Dendritic cell treated with granulocyte-macrophage colony-stimulating factor and Interleukin-4, amounts not matched to agents 40 ng/mL and 50 ng/mL, for 4 days (primary cell): ENCODE measurements at regions of chr17 and their contacts with region 1.

Region 1: DNA sequence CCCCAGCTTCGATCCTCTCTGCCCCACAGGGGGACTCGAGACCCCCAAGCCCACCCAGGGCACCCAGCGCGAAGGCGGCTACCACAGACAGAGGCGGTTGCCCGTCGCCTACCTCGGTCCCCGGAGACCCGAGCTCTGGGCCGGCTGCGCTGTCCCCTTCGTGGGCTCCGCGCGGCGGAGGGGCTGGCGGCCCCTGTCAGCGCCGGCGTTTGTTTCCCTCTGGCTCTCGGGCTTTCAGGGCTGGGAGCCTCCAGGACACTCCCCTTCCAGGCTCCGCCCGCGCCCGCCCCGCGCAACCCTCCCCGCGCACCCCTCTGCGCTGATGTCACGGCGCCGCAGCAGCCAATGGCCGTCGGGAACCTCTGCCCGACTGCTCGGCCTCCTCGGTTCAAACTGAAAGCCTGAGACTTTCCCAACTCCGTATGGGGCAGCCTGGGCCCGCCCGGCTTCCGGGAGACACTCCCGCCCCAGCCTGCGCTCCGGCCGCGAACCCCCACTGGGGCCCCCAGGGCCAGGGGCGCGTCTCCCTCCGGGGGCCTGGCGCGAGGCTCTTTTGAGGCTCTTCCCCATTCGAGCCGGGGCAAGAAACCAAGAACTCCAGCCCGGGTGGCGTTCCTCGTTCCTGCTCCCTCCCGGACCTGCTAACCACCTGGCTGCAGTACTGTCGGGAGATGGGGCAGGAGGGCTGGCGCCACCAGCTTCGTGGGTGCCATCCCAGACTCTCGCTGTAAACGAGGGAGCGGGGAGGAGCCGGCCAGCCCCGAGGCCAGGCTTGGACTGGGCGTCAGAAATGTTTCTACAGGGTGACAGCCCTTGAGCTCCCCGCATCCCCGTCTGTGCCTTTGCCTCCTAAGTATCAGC is at the start of gene CDC42EP4:
- H3K4me3 Mint-ChIP-seq: peak within 1 kb of the TSS; percentile 96
- H3K27ac Mint-ChIP-seq: peak within 1 kb of the TSS; percentile 86
- H3K4me1 Mint-ChIP-seq: peaks cover 34% of the 10 kb centered on the region
- H3K27me3 Mint-ChIP-seq: peaks cover 3% of the 10 kb centered on the region

Region 2: GRCh38 chr17:73192894-73193701 is 118.9 kb before region 1 on chr17 and contains the start of gene COG1:
- intact Hi-C with region 1: loop called (anchors 2 kb)
- H3K4me3 Mint-ChIP-seq: peak within 1 kb of the TSS; percentile 99
- H3K27ac Mint-ChIP-seq: peak within 1 kb of the TSS; percentile 92
- H3K4me1 Mint-ChIP-seq: peaks cover 22% of the 10 kb centered on the region
- H3K27me3 Mint-ChIP-seq: no peaks in the 10 kb centered on the region

Region 3: GRCh38 chr17:73231841-73232586 is 80.0 kb before region 1 on chr17:
- intact Hi-C with region 1: loop called (anchors 10 kb)
- H3K4me3 Mint-ChIP-seq: peak overlapping the region; percentile 99
- H3K27ac Mint-ChIP-seq: peak overlapping the region; percentile 92
- H3K4me1 Mint-ChIP-seq: peaks cover 51% of the 10 kb centered on the region
- H3K27me3 Mint-ChIP-seq: no peaks in the 10 kb centered on the region

Region 4: DNA sequence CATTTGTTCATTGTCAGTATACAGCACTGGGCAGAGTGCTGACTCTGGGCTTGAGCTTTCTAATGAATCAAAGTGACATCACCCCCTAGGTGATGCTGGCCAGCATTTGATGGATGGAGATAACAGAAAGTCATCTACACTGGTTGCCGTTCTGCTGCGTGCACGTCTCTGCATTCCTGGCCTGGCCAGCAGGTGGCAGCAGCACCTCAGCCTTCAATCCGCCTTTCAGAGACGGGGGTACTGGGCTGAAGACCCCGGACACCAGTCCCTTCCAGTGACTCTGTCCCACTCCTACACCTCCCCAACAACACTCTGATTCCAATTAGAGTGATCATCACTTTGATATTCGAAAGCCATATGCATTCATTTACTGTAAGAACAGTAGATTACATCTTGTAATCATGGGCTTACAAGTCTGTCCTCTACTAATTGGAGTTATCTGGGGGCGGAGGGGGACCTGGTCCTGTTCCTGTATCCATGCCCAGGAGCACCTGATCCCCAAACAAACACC is 56.3 kb before region 1 on chr17:
- intact Hi-C with region 1: no loop called
- H3K4me3 Mint-ChIP-seq: no peak overlapping the region
- H3K27ac Mint-ChIP-seq: no peak overlapping the region
- H3K4me1 Mint-ChIP-seq: peaks cover 5% of the 10 kb centered on the region
- H3K27me3 Mint-ChIP-seq: no peaks in the 10 kb centered on the region

Region 5: GRCh38 chr17:73291260-73291801 is 20.7 kb before region 1 on chr17:
- intact Hi-C with region 1: loop called (anchors 2 kb)
- H3K4me3 Mint-ChIP-seq: peak overlapping the region; percentile 58
- H3K27ac Mint-ChIP-seq: peak overlapping the region; percentile 88
- H3K4me1 Mint-ChIP-seq: peaks cover 77% of the 10 kb centered on the region
- H3K27me3 Mint-ChIP-seq: no peaks in the 10 kb centered on the region

Region 6: GRCh38 chr17:73359987-73360410 is 48.0 kb after region 1 on chr17:
- intact Hi-C with region 1: loop called (anchors 10 kb)
- H3K4me3 Mint-ChIP-seq: no peak overlapping the region
- H3K27ac Mint-ChIP-seq: no peak overlapping the region
- H3K4me1 Mint-ChIP-seq: no peaks in the 10 kb centered on the region
- H3K27me3 Mint-ChIP-seq: no peaks in the 10 kb centered on the region